Ovary (tissue), 10 donors: ENCODE measurements at regions of chr12 and their contacts with region 1.

Region 1: DNA sequence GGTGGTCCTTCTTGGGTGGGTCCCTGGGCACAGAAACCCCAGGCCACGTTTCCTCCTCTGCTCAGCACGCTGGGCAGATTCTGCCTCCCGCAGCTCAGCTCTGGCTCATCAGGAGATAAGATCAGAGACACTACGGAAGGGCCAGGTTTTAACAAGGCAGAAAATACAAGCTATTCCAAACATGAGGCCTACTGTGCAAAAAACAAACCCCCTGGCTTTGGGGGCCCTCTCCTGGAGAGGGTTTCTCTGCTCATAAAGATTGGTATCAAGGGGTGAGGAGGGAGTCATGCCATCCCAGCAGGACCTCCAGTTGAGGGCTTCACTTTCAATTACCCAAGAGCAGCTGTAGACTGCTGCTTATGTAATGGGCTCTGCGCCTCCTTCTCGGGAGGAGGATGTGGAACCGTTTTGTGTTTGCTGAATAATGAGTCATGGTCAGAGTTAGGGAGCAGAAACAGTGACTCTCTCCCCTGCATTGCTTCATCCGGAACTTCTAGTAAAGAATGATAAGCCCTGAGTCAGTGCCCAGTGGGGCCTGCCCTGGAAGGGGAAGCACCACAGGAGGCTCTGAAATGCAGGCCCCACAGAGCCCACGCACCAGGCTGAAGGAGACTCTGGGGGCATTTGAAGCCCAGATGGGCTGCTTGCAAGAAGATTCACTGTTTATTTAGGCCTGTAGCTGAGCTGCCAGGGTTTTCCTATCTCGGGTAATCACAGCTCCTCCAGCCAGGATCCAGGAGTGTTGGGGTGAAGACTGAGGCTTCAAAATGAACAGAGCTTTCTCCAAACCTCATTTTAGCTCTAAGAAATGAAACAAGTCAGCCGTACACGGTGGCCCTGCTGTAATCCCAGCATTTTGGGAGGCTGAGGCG is 79.3 kb downstream of the SSPN start:
- DNase-seq: peak; percentile 80 to 92 (median 84)
- H3K4me3 ChIP-seq: no peak overlapping the region
- H3K27ac ChIP-seq: peak overlapping the region; percentile 30 to 79
- H3K4me1 ChIP-seq: peaks cover 19% of the 10 kb centered on the region
- H3K27me3 ChIP-seq: no peaks in the 10 kb centered on the region
- CTCF ChIP-seq: no peak
- EP300 ChIP-seq: no peak
- POLR2A ChIP-seq: peak; percentile 45

Region 2: GRCh38 chr12:26203167-26203780 is 71.4 kb before region 1 on chr12:
- intact Hi-C with region 1: loop called in 2 of 4 experiments (anchors 2 to 10 kb)
- DNase-seq: no peak
- H3K4me3 ChIP-seq: no peak overlapping the region
- H3K27ac ChIP-seq: no peak overlapping the region
- H3K4me1 ChIP-seq: peaks cover 1% of the 10 kb centered on the region
- H3K27me3 ChIP-seq: no peaks in the 10 kb centered on the region
- CTCF ChIP-seq: no peak
- EP300 ChIP-seq: no peak
- POLR2A ChIP-seq: no peak

Region 3: DNA sequence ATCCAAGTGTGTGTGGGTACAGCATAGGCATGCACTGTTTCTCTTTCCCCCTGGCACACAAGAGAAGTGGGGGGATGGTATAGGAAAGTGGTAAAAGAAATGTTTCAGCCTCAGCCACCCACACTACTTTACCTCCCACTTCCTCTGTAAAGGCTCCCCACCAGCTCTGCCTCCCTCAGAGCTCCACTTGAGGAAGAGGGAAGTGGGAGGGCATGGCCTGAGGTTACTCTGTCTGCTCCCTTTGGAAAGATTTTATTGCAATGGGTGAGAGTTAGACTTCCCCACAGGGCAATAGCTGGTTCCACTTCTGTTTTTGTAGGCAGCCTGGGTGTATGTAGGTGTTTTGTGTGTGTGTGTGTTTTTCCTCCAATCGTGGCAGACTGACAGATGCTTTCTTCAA is 66.0 kb after region 1 on chr12:
- intact Hi-C with region 1: no loop called
- DNase-seq: no peak
- H3K4me3 ChIP-seq: no peak overlapping the region
- H3K27ac ChIP-seq: no peak overlapping the region
- H3K4me1 ChIP-seq: no peaks in the 10 kb centered on the region
- H3K27me3 ChIP-seq: no peaks in the 10 kb centered on the region
- CTCF ChIP-seq: no peak
- EP300 ChIP-seq: no peak
- POLR2A ChIP-seq: no peak

Region 4: DNA sequence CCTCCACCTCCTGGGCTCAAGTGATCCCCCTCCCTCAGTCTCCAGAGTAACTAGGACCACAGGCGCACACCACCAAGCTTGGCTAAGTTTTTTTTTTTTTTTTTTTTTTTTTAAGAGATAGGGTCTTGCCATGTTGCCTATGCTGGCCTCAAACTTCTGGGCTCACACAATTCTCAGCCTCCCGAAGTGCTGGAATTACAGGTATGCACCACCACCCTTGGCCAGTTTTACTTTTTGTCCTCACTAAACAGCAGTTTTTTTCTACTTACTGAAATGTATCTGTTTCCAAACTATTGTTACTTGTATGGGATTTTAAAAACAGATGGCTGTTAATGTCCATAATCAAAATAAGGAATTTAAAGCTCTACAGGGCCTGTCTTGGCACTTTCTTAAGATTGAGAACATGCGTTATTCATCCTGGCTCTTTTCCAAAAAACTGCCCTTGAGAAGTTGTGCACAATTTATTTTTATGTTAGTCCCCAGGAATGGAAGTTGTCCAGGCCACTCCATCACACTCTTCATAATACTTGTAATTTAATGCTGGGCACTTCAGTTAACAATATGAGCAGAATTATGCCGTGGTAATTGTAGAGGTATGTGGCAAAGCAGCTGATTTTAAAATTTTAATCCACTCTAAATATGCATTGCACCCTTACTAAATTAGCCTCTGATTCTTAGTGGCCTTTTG is 1369.6 kb after region 1 on chr12:
- intact Hi-C with region 1: loop called in 1 of 4 experiments (anchors 10 kb)
- DNase-seq: no peak
- H3K4me3 ChIP-seq: no peak overlapping the region
- H3K27ac ChIP-seq: no peak overlapping the region
- H3K4me1 ChIP-seq: no peaks in the 10 kb centered on the region
- H3K27me3 ChIP-seq: no peaks in the 10 kb centered on the region
- CTCF ChIP-seq: no peak
- EP300 ChIP-seq: no peak
- POLR2A ChIP-seq: no peak